Common myeloid progenitor, CD34-positive (primary cell): ENCODE measurements at regions of chr10 and their contacts with region 1.

Region 1: DNA sequence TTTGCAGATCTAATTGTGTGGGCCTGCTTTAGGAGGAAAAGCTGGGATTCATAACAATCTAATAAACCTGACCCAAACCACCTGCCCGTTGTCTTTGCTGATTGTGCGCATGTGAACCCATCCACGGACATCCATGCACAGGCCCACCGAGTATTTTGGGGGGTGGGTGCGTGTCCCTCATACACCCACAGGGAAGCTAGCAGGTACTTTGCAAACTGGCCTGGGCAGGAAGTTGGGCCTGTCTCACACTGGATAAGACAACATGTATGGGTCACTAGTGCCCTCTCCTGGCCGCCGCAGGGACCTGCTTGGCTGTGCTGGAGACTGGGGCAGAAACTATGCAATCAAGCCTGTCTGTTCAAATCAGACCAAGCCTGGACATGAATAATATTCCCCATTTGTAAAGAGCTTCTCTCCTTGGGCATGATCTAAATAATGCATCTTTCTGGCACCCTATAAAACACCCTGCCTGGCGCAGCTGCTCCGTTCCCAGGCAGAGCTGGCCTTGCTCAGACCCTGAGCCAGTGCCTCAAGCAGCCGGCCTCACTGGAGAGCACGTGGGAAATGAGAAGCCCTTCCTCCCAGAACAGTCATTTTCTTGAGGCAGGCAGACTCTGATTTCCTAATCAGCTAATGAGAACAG is 15.8 kb downstream of the ECHDC3 start:
- DNase-seq: peak; percentile 81 to 92 (median 90)
- H3K4me3 ChIP-seq: no peak overlapping the region
- H3K27ac ChIP-seq: no peak overlapping the region
- H3K4me1 ChIP-seq: peaks cover 0 to 12% (median 7%) of the 10 kb centered on the region in 4 experiments
- H3K27me3 ChIP-seq: no peaks in the 10 kb centered on the region

Region 2: DNA sequence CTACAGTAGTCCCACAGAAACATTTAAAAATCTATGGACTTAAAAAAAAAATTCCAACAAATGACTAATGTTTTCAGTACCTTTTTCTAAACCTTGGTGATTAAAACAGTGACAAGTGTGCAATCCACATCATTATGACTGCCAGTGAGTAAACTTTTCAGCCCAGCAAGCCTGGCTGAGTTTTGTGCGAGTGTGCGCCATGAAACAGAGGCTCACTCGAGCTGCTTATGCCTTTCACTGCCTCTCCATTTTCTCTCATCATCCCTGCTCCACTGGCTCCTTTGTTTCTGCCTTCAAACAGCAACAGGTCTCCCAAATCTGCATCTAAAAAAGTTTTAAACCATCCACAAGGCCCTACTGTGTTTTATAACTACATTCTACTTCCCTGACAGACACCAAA is 252.3 kb before region 1 on chr10:
- CTCF ChIA-PET with region 1: interaction called, 17 read pairs
- POLR2A ChIA-PET with region 1: interaction called, 3 read pairs
- DNase-seq: no peak
- H3K4me3 ChIP-seq: no peak overlapping the region
- H3K27ac ChIP-seq: no peak overlapping the region
- H3K4me1 ChIP-seq: peaks cover 0 to 2% (median 0%) of the 10 kb centered on the region in 4 experiments
- H3K27me3 ChIP-seq: no peaks in the 10 kb centered on the region

Region 3: DNA sequence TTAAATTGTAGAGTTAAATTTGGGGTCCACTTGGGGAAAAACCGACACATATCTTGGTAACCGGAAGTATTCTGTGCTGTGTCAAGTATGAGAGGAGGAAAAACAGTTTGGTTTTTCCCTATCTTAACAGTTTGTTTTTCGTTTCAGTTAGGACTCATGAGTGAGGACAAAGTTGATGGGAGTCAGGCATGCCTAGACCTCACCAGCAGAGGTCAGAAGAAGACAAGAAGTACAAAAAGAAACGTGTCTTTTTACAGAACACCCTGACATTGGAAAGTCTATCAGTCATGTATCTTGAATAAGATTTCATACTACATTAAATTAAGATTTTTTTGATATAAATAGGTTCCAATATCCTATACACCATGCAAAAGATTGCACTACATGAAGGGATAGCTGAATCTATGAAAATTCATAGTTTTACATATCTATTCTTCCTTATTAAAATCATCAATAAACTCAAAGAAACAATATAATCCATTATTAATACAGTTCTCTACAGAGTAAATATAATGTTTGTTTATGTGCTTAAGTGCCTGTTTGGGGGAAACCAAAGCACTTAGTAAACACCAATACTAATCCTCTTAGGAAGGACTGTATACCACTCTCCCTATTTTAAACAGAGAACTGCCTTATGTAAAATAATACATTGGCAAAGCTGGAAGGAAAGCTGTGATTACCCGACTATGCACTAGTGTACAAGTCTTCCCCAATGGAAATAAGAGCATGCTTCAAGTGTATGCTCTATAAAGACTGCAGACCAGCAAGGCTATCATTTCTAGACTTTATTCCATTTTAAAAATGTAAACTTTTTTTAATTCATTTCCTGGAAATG is 242.1 kb before region 1 on chr10:
- CTCF ChIA-PET with region 1: interaction called, 99 read pairs
- POLR2A ChIA-PET with region 1: interaction called, 3 read pairs
- DNase-seq: peak; percentile 72 to 86 (median 81)
- H3K4me3 ChIP-seq: peak overlapping the region in 1 of 7 experiments; percentile 18
- H3K27ac ChIP-seq: no peak overlapping the region
- H3K4me1 ChIP-seq: peaks cover 9 to 20% (median 14%) of the 10 kb centered on the region in 4 experiments
- H3K27me3 ChIP-seq: no peaks in the 10 kb centered on the region

Region 4: GRCh38 chr10:11724938-11725776 is 32.8 kb before region 1 on chr10:
- CTCF ChIA-PET with region 1: interaction called, 14 read pairs
- POLR2A ChIA-PET with region 1: no interaction called
- DNase-seq: peak; percentile 72 to 87 (median 83)
- H3K4me3 ChIP-seq: no peak overlapping the region
- H3K27ac ChIP-seq: no peak overlapping the region
- H3K4me1 ChIP-seq: peaks cover 0 to 20% (median 3%) of the 10 kb centered on the region in 4 experiments
- H3K27me3 ChIP-seq: no peaks in the 10 kb centered on the region

Region 5: GRCh38 chr10:11746883-11747539 is 10.9 kb before region 1 on chr10:
- CTCF ChIA-PET with region 1: interaction called, 24 read pairs
- POLR2A ChIA-PET with region 1: no interaction called
- DNase-seq: peak in 2 of 3 donors; percentile 26 to 28
- H3K4me3 ChIP-seq: peak overlapping the region in 3 of 7 experiments; percentile 10 to 24 (median 24)
- H3K27ac ChIP-seq: no peak overlapping the region
- H3K4me1 ChIP-seq: peaks cover 4 to 19% (median 11%) of the 10 kb centered on the region in 4 experiments
- H3K27me3 ChIP-seq: no peaks in the 10 kb centered on the region

Region 6: GRCh38 chr10:12051241-12051640 is 293.3 kb after region 1 on chr10:
- CTCF ChIA-PET with region 1: no interaction called
- POLR2A ChIA-PET with region 1: no interaction called
- DNase-seq: peak; percentile 17 to 71 (median 57)
- H3K4me3 ChIP-seq: no peak overlapping the region
- H3K27ac ChIP-seq: no peak overlapping the region
- H3K4me1 ChIP-seq: peaks cover 0 to 16% (median 9%) of the 10 kb centered on the region in 4 experiments
- H3K27me3 ChIP-seq: no peaks in the 10 kb centered on the region

Region 7: DNA sequence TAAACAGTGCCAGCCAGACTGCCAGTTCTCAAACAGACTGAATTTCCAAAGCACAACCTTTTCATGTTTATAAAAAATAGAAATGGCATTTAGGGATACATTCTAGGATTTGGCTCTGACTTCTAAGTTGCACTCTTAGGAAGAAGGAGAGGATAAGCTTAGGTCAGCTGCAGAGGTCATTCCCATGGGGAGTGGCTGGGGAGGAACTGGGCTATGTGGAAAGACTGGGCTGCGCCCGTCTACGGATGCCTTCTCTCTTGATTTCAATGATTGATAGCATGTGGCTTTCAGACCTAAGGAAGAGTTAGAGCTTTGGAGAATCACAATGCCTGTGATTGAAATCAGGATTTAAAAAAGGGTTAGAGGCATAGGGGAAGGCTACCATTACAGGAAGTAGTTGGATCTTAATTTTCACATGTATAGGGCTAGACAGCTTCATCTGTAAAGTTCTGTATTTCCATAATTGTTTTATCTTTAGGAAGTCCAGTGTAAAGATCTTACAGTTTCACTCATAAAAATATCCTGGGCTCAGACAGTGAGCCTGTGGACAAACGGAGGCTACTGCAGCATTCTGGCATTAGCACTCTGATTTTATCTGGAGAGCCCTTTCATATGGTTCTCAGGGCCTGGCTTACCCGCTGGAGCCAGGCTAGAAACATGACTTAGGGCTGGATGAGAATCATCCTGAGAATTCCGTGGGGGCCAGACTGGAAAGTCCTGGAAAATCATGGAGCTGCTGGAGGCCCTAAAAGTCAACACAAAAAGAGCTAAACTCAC is 408.2 kb after region 1 on chr10:
- CTCF ChIA-PET with region 1: no interaction called
- POLR2A ChIA-PET with region 1: no interaction called
- DNase-seq: no peak
- H3K4me3 ChIP-seq: no peak overlapping the region
- H3K27ac ChIP-seq: no peak overlapping the region
- H3K4me1 ChIP-seq: no peaks in the 10 kb centered on the region
- H3K27me3 ChIP-seq: no peaks in the 10 kb centered on the region